Colonic mucosa (tissue), 4 donors: ENCODE measurements at regions of chr19 and their contacts with region 1.

Region 1: GRCh38 chr19:58519355-58520256 is at the start of gene ZBTB45:
- DNase-seq: peak; percentile 93
- H3K4me3 ChIP-seq: peak within 1 kb of the TSS; percentile 74
- H3K27ac ChIP-seq: peak within 1 kb of the TSS; percentile 96
- H3K4me1 ChIP-seq: peaks cover 5% of the 10 kb centered on the region
- H3K27me3 ChIP-seq: no peaks in the 10 kb centered on the region
- CTCF ChIP-seq: peak; percentile 46
- total RNA-seq, gene ZBTB45: 13.5 to 20.2 TPM

Region 2: GRCh38 chr19:58543826-58544590 is 24.4 kb after region 1 on chr19 and contains the start of gene TRIM28:
- intact Hi-C with region 1: loop called (anchors 2 kb)
- DNase-seq: peak; percentile 99
- H3K4me3 ChIP-seq: peak within 1 kb of the TSS; percentile 90
- H3K27ac ChIP-seq: peak within 1 kb of the TSS; percentile 88
- H3K4me1 ChIP-seq: peaks cover 13% of the 10 kb centered on the region
- H3K27me3 ChIP-seq: no peaks in the 10 kb centered on the region
- CTCF ChIP-seq: no peak
- total RNA-seq, gene TRIM28: 205 to 412 TPM